Tibial artery (tissue), 4 donors: ENCODE measurements at regions of chr5 and their contacts with region 1.

Region 1: DNA sequence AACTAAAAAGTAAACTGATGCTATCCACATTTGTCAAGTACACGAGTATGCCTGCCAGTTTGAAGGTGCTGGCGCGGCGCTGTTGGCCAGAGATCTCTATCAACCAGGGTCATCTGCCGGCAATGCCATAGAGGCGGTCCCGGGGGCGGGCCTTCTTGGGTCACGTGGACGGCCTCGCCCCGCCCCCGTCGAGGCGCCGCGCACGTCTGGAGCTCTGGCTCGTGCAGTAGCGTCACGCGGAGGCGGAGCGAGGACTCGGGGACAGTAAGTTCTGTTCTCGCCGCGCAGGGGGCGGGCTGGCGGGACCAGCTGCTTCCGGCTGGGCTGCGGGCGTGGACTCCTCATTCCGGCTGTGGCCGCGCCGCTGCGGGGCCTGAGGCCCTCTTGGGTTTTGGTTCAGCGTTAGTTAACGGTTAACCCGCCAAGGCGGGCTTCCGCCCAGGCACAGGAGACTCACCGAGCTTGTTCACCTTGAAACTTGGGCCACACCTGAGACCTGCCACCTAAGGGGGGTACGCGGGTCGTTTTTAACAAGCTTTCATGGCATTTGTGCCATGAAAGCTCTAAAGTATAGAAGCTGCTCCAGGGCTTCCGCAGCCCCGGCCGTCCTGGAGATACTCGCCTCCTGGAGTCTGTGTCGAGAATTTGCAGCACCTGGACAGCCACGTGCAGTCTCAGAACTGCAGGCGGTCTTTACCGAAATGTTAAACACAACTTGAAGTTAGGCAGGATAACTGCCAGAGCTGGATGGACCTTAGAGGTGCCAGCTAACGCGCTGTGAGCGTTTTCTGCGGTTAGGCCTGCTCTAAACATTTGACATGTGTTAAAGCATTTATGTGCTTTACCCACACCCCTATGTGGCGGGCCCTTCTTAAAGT is at the start of gene RFESD:
- DNase-seq: peak; percentile 99 to 100
- H3K4me3 ChIP-seq: peak within 1 kb of the TSS; percentile 56 to 61
- H3K27ac ChIP-seq: peak within 1 kb of the TSS; percentile 91 to 95
- H3K4me1 ChIP-seq: peaks cover 0 to 23% (median 5%) of the 10 kb centered on the region in 4 donors
- H3K27me3 ChIP-seq: no peaks in the 10 kb centered on the region
- CTCF ChIP-seq: peak in 1 of 2 experiments; percentile 15

Region 2: DNA sequence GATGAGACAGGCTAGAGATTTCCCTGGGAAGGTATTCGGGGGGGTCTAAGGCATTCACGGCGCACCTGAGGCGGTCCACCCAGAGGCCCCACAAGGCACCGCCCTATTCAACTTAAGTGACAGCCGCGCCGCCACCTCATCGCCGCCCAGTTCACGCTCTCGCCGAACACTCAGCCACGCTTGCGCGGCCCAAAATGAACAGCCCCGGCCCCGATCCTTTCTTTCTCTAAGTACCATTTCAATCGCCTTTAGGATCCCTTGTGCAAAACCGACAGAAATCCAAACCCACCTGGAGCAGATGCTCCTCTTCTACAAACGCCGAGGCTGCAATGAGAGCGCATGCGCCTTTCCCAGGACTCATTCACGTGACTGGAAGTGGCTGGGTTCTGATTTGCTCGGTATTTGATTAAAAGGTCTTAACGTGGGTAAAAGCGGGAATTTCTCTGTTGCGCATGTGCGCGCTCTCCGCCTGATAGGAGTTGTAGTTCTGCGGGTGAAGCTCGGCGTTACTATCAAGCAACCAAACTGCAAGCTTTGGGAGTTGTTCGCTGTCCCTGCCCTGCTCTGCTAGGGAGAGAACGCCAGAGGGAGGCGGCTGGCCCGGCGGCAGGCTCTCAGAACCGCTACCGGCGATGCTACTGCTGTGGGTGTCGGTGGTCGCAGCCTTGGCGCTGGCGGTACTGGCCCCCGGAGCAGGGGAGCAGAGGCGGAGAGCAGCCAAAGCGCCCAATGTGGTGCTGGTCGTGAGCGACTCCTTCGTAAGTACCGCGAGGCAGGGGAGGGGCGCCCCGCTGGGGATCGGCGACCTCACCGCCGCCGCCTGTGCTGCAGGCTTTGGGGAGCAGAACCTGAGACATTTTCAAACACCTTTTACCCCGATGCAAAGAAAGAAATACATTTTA is 91.9 kb before region 1 on chr5 and contains the starts of genes ARSK and SKIC3:
- intact Hi-C with region 1: no loop called
- DNase-seq: peak; percentile 97
- H3K4me3 ChIP-seq: peak within 1 kb of the TSS; percentile 76 to 78
- H3K27ac ChIP-seq: peak within 1 kb of the TSS; percentile 87 to 88
- H3K4me1 ChIP-seq: peaks cover 0 to 27% (median 16%) of the 10 kb centered on the region in 4 donors
- H3K27me3 ChIP-seq: no peaks in the 10 kb centered on the region
- CTCF ChIP-seq: peak; percentile 43 to 47

Region 3: GRCh38 chr5:95664204-95664786 is 17.5 kb after region 1 on chr5:
- intact Hi-C with region 1: no loop called
- DNase-seq: peak in 1 of 2 donors; percentile 38
- H3K4me3 ChIP-seq: no peak overlapping the region
- H3K27ac ChIP-seq: no peak overlapping the region
- H3K4me1 ChIP-seq: peaks cover 0 to 3% (median under 1%) of the 10 kb centered on the region in 4 donors
- H3K27me3 ChIP-seq: no peaks in the 10 kb centered on the region
- CTCF ChIP-seq: peak; percentile 76 to 80

Region 4: DNA sequence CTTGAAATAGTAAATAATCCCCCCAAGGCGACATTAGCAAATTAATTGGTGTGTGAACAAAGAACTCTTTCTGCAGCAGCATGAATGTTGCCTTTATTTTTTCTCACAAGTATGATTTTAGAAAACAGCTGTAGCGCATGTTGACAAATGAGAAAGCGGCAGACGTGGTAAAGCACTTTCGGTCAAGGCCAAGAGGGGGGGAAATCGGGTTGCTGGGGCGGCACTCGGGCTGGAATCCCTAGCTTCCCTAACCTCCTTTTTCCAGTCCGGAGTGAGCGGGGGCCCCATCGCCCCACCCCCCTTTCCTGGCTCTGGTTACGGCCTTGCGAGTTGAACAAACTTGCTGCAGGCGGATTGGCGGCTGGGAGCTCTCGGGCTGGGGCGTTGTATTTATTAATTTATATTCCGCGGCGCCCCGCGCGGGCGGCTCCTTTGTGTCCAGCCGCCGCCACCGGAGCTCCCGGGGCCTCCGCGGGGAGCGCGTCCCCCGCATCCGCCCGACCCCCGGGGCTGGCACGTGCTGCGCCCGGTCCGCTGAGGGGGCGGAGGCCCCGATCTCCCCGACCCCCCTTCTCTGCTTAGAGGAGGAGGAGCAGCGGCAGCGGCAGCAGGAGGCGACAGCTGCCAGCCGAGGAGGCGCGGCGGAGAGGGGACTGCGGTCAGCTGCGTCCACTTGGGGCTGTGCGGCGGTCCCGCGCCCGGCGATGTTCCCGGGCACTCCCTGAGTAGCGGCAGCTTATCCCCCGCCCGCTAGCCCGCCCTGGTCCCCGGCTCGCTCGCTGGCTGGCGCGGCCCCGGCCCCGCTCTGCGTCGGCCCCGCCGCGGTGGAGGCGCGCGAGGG is 84.2 kb after region 1 on chr5 and contains the start of gene RHOBTB3:
- intact Hi-C with region 1: loop called (anchors 5 kb)
- DNase-seq: peak; percentile 92 to 95
- H3K4me3 ChIP-seq: peak within 1 kb of the TSS; percentile 79 to 96
- H3K27ac ChIP-seq: peak within 1 kb of the TSS; percentile 93 to 99
- H3K4me1 ChIP-seq: peaks cover 0 to 63% (median 22%) of the 10 kb centered on the region in 4 donors
- H3K27me3 ChIP-seq: no peaks in the 10 kb centered on the region
- CTCF ChIP-seq: no peak

Region 5: DNA sequence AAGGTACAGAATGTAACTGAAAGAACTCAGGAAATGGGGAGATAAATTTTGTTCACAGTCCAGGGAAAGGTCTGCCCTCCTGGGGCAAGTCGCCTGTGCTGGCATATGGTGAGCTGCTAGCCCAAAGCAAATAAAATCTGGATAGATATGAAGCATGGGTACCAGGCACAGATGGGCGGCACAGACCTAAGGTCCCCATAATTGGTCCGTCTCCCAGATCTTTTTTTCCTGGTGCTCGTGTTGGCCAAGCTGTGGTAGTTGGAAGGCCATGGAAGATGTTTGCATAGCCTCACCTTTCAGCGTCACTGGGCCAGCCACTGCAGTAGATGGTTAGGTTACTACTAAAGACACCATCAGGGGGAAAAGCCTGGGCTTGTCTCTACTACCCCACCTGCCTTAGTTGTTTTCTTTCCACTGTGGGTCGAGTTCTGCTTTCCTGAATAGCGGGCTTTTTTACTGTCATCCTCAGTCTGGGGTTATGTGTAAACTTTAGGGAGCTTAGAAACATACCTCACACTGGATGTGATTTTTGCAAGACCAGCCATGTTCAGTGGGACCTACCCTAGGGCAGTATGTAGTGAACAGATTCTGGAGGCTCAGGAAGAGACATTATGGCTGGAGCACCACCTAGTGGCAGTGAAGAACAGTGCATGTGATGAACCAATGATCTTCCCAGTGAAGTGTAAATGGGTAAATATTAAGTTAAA is 199.9 kb after region 1 on chr5:
- intact Hi-C with region 1: loop called (anchors 2 kb)
- DNase-seq: peak; percentile 73 to 80
- H3K4me3 ChIP-seq: no peak overlapping the region
- H3K27ac ChIP-seq: peak overlapping the region in 1 of 2 donors; percentile 15
- H3K4me1 ChIP-seq: peaks cover 0 to 36% (median 12%) of the 10 kb centered on the region in 4 donors
- H3K27me3 ChIP-seq: no peaks in the 10 kb centered on the region
- CTCF ChIP-seq: peak; percentile 91 to 97

Region 6: DNA sequence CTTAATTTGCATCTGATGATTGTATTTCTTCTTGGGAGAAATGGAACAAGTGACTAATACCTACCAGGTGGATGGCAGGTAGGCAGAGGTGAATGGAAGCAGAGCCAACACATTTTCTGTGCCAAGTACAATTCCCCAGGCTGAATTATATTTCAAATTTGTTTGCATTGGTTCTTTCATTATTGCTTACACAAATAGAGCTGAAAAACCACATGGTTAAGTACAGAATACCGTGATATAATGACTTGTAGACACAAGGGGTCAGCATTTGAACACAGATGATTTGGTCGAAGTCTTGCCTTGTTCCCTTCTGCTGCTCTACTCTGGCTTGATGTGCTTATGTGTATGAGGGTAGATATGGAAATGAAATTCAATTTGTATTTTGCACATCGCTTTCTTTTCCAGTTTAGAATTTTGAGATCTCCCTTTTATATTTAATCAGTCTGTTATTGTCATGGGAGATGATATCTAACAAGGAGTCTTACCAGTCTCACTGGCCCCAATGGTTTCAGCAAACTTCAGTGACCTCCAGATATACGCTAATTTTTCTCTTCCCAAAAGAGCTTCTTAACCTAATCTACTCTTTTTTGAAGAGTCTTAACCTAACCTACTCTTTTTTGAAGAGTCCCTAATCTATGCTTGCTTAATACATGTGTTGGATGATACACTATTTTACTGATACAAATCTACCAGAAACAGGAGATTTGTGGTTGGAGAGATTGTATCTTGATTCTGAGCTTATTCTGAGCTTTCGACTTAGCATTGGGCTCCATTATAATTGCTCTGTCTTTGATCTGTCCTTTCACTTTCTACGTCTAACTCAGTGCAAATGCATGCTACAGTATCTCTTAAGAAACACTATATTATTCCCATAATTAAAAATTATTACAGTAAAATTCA is 698.1 kb after region 1 on chr5:
- intact Hi-C with region 1: loop called (anchors 10 kb)
- DNase-seq: no peak
- H3K4me3 ChIP-seq: no peak overlapping the region
- H3K27ac ChIP-seq: no peak overlapping the region
- H3K4me1 ChIP-seq: peaks cover 0 to 22% (median 10%) of the 10 kb centered on the region in 4 donors
- H3K27me3 ChIP-seq: no peaks in the 10 kb centered on the region
- CTCF ChIP-seq: peak; percentile 61 to 81